Cardiac septum (tissue), 1 donor: ENCODE measurements at regions of chr3 and their contacts with region 1.

Region 1: DNA sequence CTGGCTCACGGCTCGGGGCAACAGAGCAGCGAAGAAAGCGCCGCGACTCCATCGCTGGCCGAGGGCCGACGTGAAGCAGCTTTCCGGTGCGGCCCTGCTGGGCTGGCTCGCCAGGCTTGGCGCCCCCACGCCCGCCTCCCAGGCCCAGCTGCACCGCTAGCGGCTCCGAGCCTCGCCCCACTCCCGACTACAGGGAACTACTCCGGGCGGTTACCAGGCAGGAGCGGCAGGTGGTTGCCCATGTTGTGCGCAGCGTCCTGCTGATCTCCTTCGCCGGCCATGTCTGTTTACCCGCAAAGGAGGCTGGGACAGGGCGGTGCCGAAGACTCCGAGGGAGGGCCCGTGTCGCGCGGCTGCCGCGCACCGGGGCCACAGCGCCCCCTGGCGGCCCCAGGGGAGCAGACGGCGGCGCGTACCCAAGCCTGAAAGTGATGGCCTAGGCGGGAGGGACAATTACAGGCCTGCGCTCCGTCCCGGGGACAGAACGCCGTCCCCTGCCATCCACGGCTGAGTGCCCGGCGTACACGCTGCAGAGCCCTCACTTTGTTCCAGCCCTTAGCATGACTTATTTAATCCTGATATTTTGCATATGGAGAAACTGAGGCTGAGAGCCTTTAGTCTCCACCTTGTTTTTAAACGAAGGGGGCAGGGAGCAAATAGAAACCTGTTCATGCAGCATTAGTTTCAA is at the start of gene CRBN:
- DNase-seq: peak; percentile 97
- total RNA-seq, gene CRBN: 41.3 TPM

Region 2: GRCh38 chr3:3126477-3127431 is 52.8 kb before region 1 on chr3 and contains the start of gene TRNT1:
- intact Hi-C with region 1: loop called (anchors 2 kb)
- DNase-seq: peak; percentile 98
- total RNA-seq, gene TRNT1: 13.2 TPM